ENCODE measurements at regions of chr9 and their contacts with region 1.

Region 1: DNA sequence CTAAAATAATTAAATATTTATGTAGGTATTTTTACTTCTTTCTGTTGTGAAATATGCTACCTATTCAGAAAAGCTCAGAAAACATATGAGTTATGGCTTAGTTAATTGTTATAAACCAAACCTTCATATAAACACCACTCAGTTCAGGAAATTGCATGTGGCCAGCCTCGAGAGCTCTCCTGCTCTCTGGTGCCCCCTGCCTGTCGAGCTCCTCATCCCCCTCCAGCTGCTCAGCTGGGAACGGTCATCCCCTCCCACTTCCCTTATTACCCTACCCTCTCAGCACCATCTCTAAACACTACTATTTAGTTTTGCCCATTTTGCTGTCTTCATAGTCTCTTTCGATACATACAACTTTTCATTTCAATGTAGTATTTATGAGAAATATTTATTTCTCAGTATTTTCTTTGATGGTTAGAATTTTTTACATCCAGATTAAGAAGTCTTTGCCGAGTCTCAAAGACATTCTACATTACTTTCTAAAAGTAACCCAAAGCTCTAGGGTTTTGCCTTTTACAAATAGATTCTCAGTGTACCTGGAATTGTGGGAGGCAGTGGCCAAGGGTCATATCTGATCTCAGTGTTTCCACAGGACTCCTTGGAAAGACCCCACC is 51.2 kb upstream of the SEMA4D start:
- DNase-seq: peak; percentile 60 to 74 (median 69)
- ATAC-seq: peak; percentile 97
- H3K4me3 ChIP-seq: no peak overlapping the region
- H3K27ac ChIP-seq: no peak overlapping the region
- H3K4me1 ChIP-seq: no peaks in the 10 kb centered on the region
- H3K27me3 ChIP-seq: peaks cover 0 to 4% of the 10 kb centered on the region in 2 experiments; a peak in 1 of 5 replicates
- CTCF ChIP-seq: peak; percentile 66 to 73 (median 67)
- EP300 ChIP-seq: no peak
- POLR2A ChIP-seq: no peak
- RAD21 ChIP-seq: peak; percentile 61 to 62

Region 2: DNA sequence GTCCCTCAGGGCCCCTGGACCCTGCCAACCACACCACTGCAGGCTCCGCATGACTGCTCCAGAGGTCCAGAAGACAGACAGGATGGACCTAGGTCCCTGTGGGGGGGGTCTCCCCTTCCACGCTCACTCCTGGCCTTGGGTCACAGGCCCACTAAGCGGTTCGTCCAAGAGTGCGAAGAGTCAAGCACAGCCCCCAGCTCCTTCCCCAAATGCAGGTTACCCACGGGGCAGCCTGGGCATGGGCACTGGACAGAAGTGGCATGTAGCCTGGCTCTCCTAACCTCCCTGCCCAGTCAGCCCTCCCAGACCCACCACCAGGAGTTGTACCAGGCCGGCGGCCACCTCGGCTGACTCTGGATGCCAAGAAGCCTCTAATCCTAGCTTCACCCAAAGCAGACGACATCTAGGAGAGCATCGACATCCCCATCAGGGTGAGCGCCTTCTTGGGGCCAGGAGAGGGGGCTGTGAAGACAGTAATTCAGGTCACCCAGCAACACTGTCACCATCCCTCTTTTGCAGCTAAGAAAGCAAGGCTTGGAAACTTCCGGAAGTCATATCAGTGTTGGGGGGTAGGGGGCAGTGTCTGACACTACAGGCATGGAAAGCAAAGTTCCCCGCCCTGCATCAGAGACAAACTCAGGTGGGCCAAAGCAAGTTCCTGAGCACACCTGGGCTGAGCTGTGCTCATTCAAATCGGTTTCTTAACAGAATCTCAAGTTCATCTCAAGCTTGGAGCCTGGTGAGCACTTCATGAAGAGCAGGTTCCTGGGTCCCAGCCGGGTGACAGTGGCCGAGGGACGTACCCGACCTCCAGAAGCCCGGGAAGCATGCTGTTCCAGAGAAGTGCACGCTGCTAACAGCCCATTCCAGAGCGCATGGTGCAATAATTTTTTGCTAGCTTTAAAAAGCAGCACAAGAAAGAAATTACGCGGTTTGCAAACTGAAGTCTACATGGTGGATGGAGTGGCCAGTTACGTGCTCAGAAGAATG is 119.9 kb before region 1 on chr9:
- CTCF ChIA-PET with region 1: interaction called, 4 read pairs
- POLR2A ChIA-PET with region 1: no interaction called
- in situ Hi-C with region 1: no loop called
- intact Hi-C with region 1: loop called (anchors 5 kb)
- DNase-seq: peak; percentile 38 to 53 (median 50)
- ATAC-seq: peak; percentile 87
- H3K4me3 ChIP-seq: no peak overlapping the region
- H3K27ac ChIP-seq: no peak overlapping the region
- H3K4me1 ChIP-seq: no peaks in the 10 kb centered on the region
- H3K27me3 ChIP-seq: peaks cover 0 to 14% of the 10 kb centered on the region in 2 experiments; a peak in 2 of 5 replicates
- CTCF ChIP-seq: peak; percentile 60 to 63 (median 60)
- EP300 ChIP-seq: no peak
- POLR2A ChIP-seq: no peak
- RAD21 ChIP-seq: peak; percentile 17 to 35; a peak in 1 of 4 replicates

Region 3: GRCh38 chr9:89602978-89603766 is 54.0 kb after region 1 on chr9:
- CTCF ChIA-PET with region 1: no interaction called
- POLR2A ChIA-PET with region 1: no interaction called
- in situ Hi-C with region 1: no loop called
- intact Hi-C with region 1: no loop called
- DNase-seq: peak; percentile 33 to 81 (median 38)
- ATAC-seq: peak; percentile 66
- H3K4me3 ChIP-seq: no peak overlapping the region
- H3K27ac ChIP-seq: no peak overlapping the region
- H3K4me1 ChIP-seq: peaks cover 10 to 31% of the 10 kb centered on the region in 2 experiments; a peak in 4 of 5 replicates
- H3K27me3 ChIP-seq: no peaks in the 10 kb centered on the region
- CTCF ChIP-seq: peak; percentile 76 to 79 (median 76)
- EP300 ChIP-seq: no peak
- POLR2A ChIP-seq: no peak
- RAD21 ChIP-seq: peak; percentile 78 to 82

Measured in K562 (cell line).